ENCODE measurements at regions of chr18 and their contacts with region 1.

Region 1: DNA sequence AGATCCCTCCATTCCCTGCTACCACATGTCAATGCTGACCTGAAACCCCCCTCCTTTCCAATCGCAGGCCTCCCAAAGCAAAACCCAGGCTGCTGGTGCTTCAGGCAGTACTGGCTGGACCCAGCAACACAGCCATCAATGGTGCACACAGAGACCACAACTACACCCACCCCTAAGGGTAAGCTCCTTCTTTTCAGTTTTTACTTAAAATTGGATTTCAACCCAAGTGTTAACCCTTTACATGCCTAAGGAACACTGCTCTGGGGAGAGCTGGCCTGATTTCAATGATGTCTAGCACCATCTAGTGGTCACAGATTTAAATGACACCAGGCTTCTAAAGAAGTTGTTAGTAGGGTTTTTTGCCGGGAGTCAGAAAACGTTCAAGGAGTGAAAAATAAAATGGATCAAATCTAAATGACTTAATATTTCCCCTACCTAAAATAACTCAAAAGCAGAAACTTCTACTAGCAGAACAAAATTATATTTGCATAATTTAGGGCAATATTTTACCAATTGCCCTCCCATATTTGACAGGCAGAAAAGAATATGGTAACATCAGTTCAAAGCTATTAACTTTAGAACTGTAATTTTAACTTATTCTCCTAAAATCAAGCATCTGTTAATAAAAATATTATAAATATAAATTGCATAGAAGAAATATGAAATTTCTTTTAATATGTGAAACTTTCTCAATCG is 24.6 kb downstream of the FECH start:
- DNase-seq: peak; percentile 29 to 48 (median 43)
- H3K4me3 ChIP-seq: no peak overlapping the region
- H3K4me3 Mint-ChIP-seq: no peak overlapping the region
- H3K27ac ChIP-seq: no peak overlapping the region
- H3K27ac Mint-ChIP-seq: no peak overlapping the region
- H3K4me1 ChIP-seq: no peaks in the 10 kb centered on the region
- H3K4me1 Mint-ChIP-seq: no peaks in the 10 kb centered on the region
- H3K27me3 ChIP-seq: no peaks in the 10 kb centered on the region
- H3K27me3 Mint-ChIP-seq: no peaks in the 10 kb centered on the region
- CTCF ChIP-seq: peak; percentile 95

Region 2: GRCh38 chr18:56748698-56749268 is 813.1 kb before region 1 on chr18:
- intact Hi-C with region 1: loop called (anchors 5 to 10 kb)
- DNase-seq: peak; percentile 4 to 30 (median 8)
- H3K4me3 ChIP-seq: no peak overlapping the region
- H3K4me3 Mint-ChIP-seq: no peak overlapping the region
- H3K27ac ChIP-seq: no peak overlapping the region
- H3K27ac Mint-ChIP-seq: no peak overlapping the region
- H3K4me1 ChIP-seq: no peaks in the 10 kb centered on the region
- H3K4me1 Mint-ChIP-seq: peaks cover 5% of the 10 kb centered on the region
- H3K27me3 ChIP-seq: no peaks in the 10 kb centered on the region
- H3K27me3 Mint-ChIP-seq: no peaks in the 10 kb centered on the region
- CTCF ChIP-seq: peak; percentile 75

Measured in CD14-positive monocyte (primary cell).